MCF 10A (cell line): ENCODE measurements at regions of chr16 and their contacts with region 1.

Region 1: DNA sequence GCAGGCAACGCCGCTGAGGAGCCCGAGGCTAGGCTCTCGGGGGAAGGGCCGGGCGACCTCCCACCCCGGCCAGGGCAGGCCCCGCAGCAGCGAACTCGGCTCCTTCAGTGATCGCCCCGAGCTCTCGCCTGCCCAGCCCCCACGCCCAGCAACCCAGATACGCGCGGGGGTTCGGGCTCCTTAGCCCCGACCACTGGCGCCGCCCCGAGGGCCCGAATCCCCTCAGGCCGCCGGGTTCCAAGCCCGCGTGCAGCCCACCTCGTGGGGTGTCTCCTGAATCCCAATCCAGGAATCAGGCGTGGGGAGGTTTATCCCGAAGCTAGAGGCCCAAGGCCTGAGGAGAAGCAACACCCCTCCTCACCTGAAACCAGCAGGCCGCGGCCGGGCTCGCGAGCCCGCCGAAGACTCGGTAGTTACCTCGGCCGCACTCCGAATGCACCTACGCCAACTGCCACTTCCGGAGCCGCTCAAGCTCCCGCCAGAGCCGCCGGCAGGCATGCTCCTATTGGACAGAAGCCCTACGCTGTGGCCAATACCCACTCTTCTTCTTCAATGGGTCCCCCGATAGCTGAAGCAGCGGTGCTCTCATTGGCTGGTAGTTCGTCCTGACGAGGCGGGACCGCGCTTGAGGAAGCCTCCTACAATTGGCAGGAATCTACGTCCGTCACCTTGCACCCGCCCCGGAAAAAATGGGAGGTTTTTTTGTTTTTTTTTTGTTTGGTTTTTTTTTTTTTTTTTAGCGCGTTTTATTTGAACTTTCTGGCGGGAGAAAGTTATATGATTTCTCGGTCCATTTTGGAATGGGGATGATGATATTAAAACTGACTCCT is at the start of gene RFWD3:
- DNase-seq: peak; percentile 98
- H3K4me3 Mint-ChIP-seq: peak within 1 kb of the TSS; percentile 89
- H3K27ac Mint-ChIP-seq: peak within 1 kb of the TSS; percentile 97
- H3K4me1 Mint-ChIP-seq: peaks cover 5% of the 10 kb centered on the region
- H3K27me3 Mint-ChIP-seq: no peaks in the 10 kb centered on the region
- CTCF ChIP-seq: no peak
- total RNA-seq, gene RFWD3: 31.2 and 33.7 TPM in 2 replicates

Region 2: GRCh38 chr16:74650966-74651567 is 15.6 kb before region 1 on chr16:
- CTCF ChIA-PET with region 1: interaction called, 10 read pairs
- POLR2A ChIA-PET with region 1: interaction called, 9 read pairs
- intact Hi-C with region 1: no loop called
- DNase-seq: peak; percentile 8
- H3K4me3 Mint-ChIP-seq: no peak overlapping the region
- H3K27ac Mint-ChIP-seq: no peak overlapping the region
- H3K4me1 Mint-ChIP-seq: peaks cover 24% of the 10 kb centered on the region
- H3K27me3 Mint-ChIP-seq: no peaks in the 10 kb centered on the region
- CTCF ChIP-seq: peak; percentile 55